ENCODE measurements at regions of chr19 and their contacts with region 1.

Region 1: GRCh38 chr19:13102666-13103580 is at the start of gene LYL1:
- DNase-seq: peak; percentile 92
- ATAC-seq: peak; percentile 73
- total RNA-seq, gene LYL1: 9.4 TPM

Region 2: DNA sequence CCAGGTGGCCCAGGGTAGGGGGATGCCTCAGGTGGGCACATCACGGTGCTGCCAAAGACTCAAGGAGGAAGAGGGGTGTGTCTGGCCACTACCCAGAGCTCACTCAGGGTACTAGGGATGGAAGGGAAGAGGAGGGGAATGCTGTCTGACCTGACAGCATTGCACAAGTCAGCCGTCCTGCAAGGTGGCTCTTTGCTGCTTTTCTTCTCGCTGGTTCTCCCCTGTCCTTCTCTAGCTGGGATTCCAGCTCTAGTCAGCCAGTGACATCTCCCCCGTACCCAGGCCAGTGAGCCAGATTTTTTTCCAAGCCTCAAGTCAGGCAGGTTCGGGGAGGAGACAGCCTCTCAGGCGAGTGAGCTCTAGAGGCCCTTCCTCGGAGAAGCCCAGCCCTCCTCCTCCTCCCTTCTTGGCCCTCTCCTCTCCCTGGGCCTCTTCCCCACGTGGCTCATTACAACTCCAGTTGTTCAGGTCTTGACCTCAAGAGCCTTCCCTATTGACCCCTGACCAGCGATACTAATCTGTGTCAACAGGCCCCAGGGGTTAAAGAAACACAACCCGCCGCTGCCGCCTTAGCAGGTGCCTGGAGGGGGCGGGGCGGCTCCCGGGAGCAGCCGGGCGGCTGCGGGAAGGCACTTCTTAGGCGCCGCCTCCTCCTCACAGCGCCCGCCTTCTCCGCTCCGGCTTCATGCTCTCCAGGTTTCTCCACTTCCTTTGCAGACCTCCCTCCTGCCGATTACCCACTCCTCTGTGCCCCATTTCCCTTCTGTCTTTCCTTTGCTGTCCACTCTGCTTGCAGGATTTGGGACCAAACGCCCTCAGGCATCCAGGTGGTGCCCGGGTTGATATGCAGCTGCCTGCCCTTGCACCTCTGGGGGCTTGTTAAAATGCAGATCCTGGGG is 51.4 kb before region 1 on chr19:
- intact Hi-C with region 1: loop called (anchors 5 kb)
- DNase-seq: no peak
- ATAC-seq: no peak

Region 3: DNA sequence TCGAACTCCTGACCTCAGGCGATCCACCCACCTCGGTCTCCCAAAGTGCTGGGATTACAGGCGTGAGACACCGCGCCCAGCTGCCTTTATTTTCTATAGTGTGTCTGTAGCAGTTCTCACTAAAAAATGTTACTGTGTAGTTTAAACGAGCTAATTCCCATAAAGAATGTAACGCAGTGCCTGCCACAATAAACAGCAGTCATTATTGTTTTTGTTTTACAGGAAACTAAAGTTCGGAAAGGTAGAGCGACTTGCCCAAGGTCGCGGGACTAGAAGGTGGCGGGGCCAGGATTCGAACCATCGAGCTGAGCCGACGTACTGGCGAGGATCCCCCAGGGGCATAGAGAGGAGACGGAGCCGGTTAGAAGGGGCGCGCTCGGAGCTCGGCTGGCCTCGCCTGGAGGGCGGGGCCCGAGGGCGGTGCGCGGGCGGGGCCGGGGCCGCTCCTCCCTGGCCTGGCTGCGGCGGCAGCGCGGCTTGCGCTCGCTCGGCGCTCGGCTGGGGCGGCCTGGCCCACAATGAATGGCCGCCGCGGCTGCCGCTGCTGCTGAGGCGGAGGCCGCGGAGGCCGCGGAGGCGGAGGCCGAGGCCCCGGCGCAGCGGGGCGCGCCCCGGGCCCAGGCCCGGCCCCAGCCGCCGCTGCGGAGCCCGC is 15.0 kb after region 1 on chr19 and contains the start of gene NACC1:
- intact Hi-C with region 1: loop called (anchors 2 kb)
- DNase-seq: peak; percentile 95
- ATAC-seq: peak; percentile 95
- total RNA-seq, gene NACC1: 54.0 TPM

Region 4: GRCh38 chr19:13150187-13150930 is 47.4 kb after region 1 on chr19 and contains the starts of genes IER2 and STX10:
- intact Hi-C with region 1: loop called (anchors 2 kb)
- DNase-seq: peak; percentile 98
- ATAC-seq: peak; percentile 76
- total RNA-seq, gene IER2: 18.8 TPM
- total RNA-seq, gene STX10: 34.5 TPM

Region 5: GRCh38 chr19:13162518-13163314 is 59.8 kb after region 1 on chr19:
- intact Hi-C with region 1: loop called (anchors 2 kb)
- DNase-seq: peak; percentile 98
- ATAC-seq: peak; percentile 92